A549 (cell line): ENCODE measurements at regions of chr1 and their contacts with region 1.

Region 1: GRCh38 chr1:153566440-153567379 is 1.1 kb upstream of the S100A2 start:
- DNase-seq: peak; percentile 99
- ATAC-seq: peak; percentile 82 to 89
- H3K4me3 ChIP-seq: peak overlapping the region; percentile 15; the same call in 1 of the 3 replicates
- H3K27ac ChIP-seq: peak overlapping the region; percentile 97 to 100
- H3K4me1 ChIP-seq: peaks cover 57% of the 10 kb centered on the region
- CTCF ChIP-seq: no peak
- EP300 ChIP-seq: peak; percentile 75 to 85; a peak in 3 of 5 replicates
- POLR2A ChIP-seq: no peak
- RAD21 ChIP-seq: peak; percentile 30 to 58; a peak in 4 of 5 replicates

Region 2: GRCh38 chr1:153545067-153546055 is 21.3 kb before region 1 on chr1 and contains the start of gene S100A4:
- CTCF ChIA-PET with region 1: interaction called, 471 read pairs
- POLR2A ChIA-PET with region 1: interaction called, 39 read pairs
- DNase-seq: peak; percentile 94 to 97
- ATAC-seq: peak; percentile 70 to 79
- H3K4me3 ChIP-seq: peak within 1 kb of the TSS; percentile 62
- H3K27ac ChIP-seq: peak within 1 kb of the TSS; percentile 96 to 97
- H3K4me1 ChIP-seq: peaks cover 96% of the 10 kb centered on the region
- CTCF ChIP-seq: no peak
- EP300 ChIP-seq: no peak
- POLR2A ChIP-seq: peak; percentile 85
- RAD21 ChIP-seq: peak; percentile 12 to 24; a peak in 2 of 5 replicates
- polyA plus RNA-seq, gene S100A4: 590 and 814 TPM in 2 replicates